ENCODE measurements at regions of chr7 and their contacts with region 1.

Region 1: DNA sequence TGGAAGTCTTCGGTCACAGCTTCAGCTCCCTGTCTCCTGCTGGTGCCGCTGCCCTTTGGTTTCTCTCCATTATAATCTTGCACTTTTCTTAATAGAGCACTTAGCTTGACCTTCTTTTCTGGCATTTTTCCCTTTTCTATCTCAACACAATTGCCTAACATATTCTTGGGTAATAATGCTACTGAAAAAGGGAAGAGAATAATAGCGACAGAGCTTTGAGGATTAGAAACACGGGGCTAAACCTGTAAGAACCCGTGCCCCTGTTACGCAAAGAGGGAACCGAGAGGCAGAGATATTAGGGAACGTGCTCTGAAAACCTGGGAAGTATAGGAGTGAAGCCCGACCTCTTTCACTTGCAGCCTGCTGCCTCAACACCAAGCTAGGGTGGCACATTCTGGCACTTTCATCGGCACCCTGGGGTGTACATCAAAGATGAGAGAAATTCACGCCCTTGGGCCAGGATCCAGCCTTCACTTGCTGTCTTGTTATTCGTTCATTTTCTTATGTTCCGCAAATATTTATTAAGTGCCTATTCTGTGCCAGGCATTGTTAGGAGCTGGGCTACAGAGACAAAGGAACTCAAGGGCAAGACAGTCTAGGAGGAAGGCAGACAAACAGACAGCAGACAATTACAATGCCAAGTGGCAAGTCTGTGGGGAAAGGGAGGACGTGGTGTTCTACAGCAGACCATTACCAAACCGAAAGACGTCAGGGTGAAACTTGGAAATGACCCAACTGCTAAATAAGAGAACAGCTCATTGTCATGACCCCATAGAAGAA is 33.0 kb upstream of the GALNTL5 start:
- DNase-seq: no peak
- ATAC-seq: no peak
- H3K4me3 ChIP-seq: no peak overlapping the region
- H3K27ac ChIP-seq: no peak overlapping the region
- H3K4me1 ChIP-seq: no peaks in the 10 kb centered on the region
- H3K27me3 ChIP-seq: no peaks in the 10 kb centered on the region
- CTCF ChIP-seq: no peak
- POLR2A ChIP-seq: no peak
- RAD21 ChIP-seq: no peak

Region 2: GRCh38 chr7:151539088-151539671 is 384.1 kb before region 1 on chr7:
- CTCF ChIA-PET with region 1: no interaction called
- POLR2A ChIA-PET with region 1: no interaction called
- RAD21 ChIA-PET with region 1: no interaction called
- intact Hi-C with region 1: no loop called
- DNase-seq: no peak
- ATAC-seq: peak; percentile 47
- H3K4me3 ChIP-seq: no peak overlapping the region
- H3K27ac ChIP-seq: no peak overlapping the region
- H3K4me1 ChIP-seq: peaks cover 3 to 9% of the 10 kb centered on the region in 2 experiments; a peak in 3 of 4 replicates
- H3K27me3 ChIP-seq: no peaks in the 10 kb centered on the region
- CTCF ChIP-seq: no peak
- POLR2A ChIP-seq: no peak
- RAD21 ChIP-seq: no peak

Region 3: DNA sequence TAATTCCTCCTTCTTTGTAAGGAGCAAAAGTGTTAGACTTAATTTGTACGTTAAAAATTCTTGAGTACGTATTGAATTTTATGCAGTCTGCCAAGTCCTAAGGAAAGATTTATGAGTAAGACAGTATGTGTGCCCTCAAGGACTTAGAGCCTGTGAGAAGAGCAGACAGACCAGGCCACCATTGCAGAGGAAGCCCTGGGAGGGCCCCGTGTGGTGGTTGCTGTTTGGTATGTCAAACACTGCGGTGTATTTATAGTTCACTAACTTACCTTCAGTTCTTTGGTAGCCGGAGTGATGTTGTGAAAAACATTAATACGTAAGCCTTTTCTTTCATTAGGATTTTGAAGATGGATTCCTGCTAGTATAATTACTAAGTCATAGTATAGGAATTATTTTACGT is 185.1 kb after region 1 on chr7:
- CTCF ChIA-PET with region 1: no interaction called
- POLR2A ChIA-PET with region 1: no interaction called
- RAD21 ChIA-PET with region 1: no interaction called
- intact Hi-C with region 1: loop called (anchors 2 kb)
- DNase-seq: no peak
- ATAC-seq: no peak
- H3K4me3 ChIP-seq: no peak overlapping the region
- H3K27ac ChIP-seq: no peak overlapping the region
- H3K4me1 ChIP-seq: no peaks in the 10 kb centered on the region
- H3K27me3 ChIP-seq: no peaks in the 10 kb centered on the region
- CTCF ChIP-seq: no peak
- POLR2A ChIP-seq: no peak
- RAD21 ChIP-seq: 0 out of 2 replicates have a peak, but pooled peaks have one; percentile 5